ENCODE measurements at regions of chr4 and their contacts with region 1.

Region 1: DNA sequence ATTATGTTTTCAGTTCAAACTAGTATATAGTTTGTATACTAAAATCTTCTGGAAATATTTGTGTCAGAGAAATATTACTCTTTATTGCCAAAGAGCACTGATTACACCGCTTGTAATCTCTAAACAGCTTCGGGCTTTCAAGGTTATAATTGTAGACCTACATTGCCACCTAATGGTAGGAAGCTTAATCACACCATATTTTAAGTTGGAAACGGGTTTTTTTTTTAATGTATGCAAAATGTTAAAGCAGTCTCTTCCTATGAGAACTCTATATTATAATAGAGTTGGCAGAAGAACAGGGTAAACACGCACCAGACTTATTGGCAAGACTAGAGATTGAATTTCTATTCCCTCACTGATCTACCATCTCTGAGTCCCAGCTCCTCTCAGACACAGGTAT is 19.5 kb upstream of the NFXL1 start:
- DNase-seq: no peak
- H3K4me3 Mint-ChIP-seq: no peak overlapping the region
- H3K27ac Mint-ChIP-seq: no peak overlapping the region
- H3K4me1 Mint-ChIP-seq: peaks cover 2% of the 10 kb centered on the region
- H3K27me3 Mint-ChIP-seq: no peaks in the 10 kb centered on the region

Region 2: DNA sequence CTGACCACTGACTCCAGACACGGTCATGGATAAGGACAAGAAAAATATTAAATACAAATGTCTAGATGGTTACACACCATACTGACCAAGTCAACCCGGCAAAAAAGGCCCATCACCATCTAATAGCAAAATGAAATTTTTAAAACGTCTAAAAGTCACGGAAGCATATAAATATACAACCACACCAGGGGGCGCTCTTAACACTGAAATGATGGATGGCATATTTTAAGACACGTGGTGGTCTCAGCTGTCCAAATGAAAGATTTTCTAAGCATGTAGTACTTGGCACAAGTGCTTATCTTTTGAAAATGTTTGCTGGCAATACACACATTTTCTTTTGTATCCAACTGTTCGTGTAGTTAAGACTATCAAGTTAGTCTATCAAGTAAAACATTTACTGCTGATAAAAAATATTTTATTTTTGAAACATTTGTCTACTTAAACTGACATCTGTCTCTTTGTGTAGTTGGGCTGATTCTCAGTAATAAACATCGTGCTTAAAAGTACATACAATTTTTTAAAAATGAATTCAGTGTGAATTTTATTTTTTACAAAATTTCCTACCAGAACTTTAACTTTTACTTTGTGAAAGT is 1089.4 kb before region 1 on chr4:
- CTCF ChIA-PET with region 1: no interaction called
- intact Hi-C with region 1: loop called (anchors 10 kb)
- DNase-seq: peak; percentile 66
- H3K4me3 Mint-ChIP-seq: no peak overlapping the region
- H3K27ac Mint-ChIP-seq: no peak overlapping the region
- H3K4me1 Mint-ChIP-seq: no peaks in the 10 kb centered on the region
- H3K27me3 Mint-ChIP-seq: no peaks in the 10 kb centered on the region

Region 3: GRCh38 chr4:47490550-47490949 is 443.3 kb before region 1 on chr4:
- CTCF ChIA-PET with region 1: interaction called, 3 read pairs
- intact Hi-C with region 1: loop called (anchors 5 kb)
- DNase-seq: peak; percentile 40
- H3K4me3 Mint-ChIP-seq: no peak overlapping the region
- H3K27ac Mint-ChIP-seq: no peak overlapping the region
- H3K4me1 Mint-ChIP-seq: peaks cover 24% of the 10 kb centered on the region
- H3K27me3 Mint-ChIP-seq: no peaks in the 10 kb centered on the region

Region 4: DNA sequence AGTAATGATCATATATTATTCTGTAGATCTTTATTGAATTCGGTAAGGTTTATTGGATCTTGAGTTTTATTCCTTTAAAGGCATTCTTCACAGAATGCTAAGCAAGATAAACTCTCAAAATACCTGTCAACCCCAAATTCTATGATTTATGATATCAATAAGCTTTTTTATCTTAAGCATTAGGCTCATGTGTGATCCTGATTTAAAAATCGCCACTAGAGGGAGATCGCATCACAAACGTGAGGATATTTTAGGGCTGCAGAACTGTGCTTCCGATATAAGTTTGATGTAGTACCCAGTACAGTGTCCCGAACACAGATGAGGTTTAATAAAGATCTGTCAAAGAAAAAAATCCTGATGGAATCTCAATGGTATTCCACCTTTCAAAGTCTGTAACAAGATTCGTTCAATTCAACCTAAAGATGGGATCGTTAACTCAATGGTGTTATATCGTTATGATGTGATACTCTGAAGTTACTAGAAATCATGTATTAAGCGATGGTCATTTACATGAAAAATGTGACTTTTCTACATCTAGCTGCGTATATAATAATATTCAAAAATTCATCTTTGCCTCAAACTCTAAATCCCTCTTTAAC is 264.9 kb before region 1 on chr4:
- CTCF ChIA-PET with region 1: interaction called, 19 read pairs
- intact Hi-C with region 1: loop called (anchors 1 kb)
- DNase-seq: peak; percentile 27
- H3K4me3 Mint-ChIP-seq: no peak overlapping the region
- H3K27ac Mint-ChIP-seq: no peak overlapping the region
- H3K4me1 Mint-ChIP-seq: no peaks in the 10 kb centered on the region
- H3K27me3 Mint-ChIP-seq: peaks cover 5% of the 10 kb centered on the region

Region 5: DNA sequence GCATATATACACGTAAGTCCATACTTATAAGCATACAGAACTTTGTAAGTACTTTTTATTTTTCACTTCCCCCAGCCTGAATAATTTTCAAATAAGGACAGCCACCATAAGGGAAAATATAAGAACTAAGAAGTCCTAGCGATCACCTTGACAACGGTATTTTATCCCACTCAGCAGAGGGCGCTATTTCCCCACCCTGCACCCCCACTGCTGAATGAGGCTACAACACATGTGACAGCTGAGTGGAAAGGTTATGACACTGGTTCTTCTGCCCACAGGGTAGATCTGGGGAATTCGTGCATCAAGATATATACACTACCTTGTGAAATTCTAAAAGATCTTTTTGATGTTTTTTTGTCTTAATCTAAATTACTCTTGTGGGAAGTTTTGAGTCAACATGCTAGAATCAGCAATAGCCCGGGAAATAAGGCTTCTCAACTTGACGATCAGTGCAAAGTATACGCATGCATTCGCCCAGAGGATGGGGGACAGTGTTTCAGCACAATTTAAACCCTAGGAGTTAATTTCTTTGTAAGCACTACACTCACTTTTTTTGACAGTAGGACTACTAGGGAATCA is 247.5 kb before region 1 on chr4:
- CTCF ChIA-PET with region 1: interaction called, 29 read pairs
- intact Hi-C with region 1: loop called (anchors 1 kb)
- DNase-seq: peak; percentile 85
- H3K4me3 Mint-ChIP-seq: no peak overlapping the region
- H3K27ac Mint-ChIP-seq: no peak overlapping the region
- H3K4me1 Mint-ChIP-seq: no peaks in the 10 kb centered on the region
- H3K27me3 Mint-ChIP-seq: peaks cover 4% of the 10 kb centered on the region

Region 6: DNA sequence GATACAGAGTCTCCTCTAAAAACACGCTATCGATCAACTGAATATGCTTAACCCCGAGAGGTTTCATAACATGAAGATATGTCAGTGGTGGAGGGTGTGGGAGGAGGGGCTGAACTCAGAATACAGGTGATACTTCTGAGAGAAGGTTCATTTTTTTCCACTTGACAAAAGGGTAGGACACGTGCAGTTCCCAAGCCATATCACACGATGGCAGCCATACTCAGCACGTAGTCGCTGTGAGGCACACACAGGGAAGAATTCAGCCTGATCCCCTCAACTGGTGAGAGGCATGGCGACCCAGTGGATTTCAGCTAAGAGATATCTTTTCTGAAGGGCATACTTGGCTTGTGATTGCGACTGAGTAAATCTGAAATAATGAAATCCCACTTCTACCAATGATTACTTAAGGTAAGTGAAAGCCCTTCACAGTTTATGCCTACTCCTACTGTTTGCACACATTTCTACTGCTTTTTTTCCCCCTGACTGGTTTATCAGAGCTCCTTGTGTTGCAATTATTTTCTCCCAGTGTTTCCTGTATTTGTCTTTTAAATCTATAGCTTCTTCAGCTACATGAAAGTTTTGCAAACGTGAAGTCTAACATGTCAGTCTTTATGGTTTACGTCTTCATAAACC is 229.0 kb before region 1 on chr4:
- CTCF ChIA-PET with region 1: interaction called, 8 read pairs
- intact Hi-C with region 1: loop called (anchors 1 kb)
- DNase-seq: peak; percentile 37
- H3K4me3 Mint-ChIP-seq: no peak overlapping the region
- H3K27ac Mint-ChIP-seq: no peak overlapping the region
- H3K4me1 Mint-ChIP-seq: no peaks in the 10 kb centered on the region
- H3K27me3 Mint-ChIP-seq: peaks cover 15% of the 10 kb centered on the region

Region 7: DNA sequence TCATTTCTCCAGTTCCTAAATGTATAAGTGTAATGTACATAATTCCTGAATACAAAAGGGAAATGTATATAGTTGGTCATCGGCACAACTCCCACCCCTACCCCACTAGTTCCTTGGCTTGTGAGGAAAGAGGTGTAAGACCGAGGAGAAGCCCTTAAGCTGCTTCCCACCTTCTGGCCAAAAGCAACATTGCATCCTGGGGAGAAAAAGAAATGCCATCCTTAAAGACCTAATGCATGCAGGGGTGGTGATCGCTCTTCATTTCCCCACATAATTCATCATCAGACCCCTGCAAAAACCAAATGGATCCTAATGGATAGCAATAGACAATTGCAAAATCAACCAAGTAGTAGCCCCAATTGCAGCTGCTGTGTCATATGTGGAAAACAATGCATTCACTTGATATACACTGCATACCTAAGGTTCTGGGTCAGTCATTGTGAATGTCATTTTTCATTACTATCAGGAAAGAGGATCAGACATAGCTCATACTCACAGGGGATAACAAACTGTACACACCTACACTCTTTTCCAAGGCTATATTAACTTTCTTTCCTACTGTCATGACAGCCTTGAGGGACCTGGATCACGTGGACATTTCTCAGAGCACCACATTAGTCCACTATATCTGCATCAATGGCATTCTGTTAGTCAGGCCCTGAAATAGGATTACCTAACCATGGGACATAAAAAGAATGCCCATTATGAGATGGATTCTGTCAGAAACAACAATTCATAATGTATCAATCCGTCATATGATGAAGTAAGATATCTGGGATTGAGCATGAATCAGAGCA is 12.3 kb after region 1 on chr4:
- CTCF ChIA-PET with region 1: interaction called, 12 read pairs
- intact Hi-C with region 1: no loop called
- DNase-seq: no peak
- H3K4me3 Mint-ChIP-seq: no peak overlapping the region
- H3K27ac Mint-ChIP-seq: no peak overlapping the region
- H3K4me1 Mint-ChIP-seq: no peaks in the 10 kb centered on the region
- H3K27me3 Mint-ChIP-seq: no peaks in the 10 kb centered on the region

Region 8: GRCh38 chr4:48557478-48557877 is 623.6 kb after region 1 on chr4:
- CTCF ChIA-PET with region 1: no interaction called
- intact Hi-C with region 1: no loop called
- DNase-seq: peak; percentile 9
- H3K4me3 Mint-ChIP-seq: no peak overlapping the region
- H3K27ac Mint-ChIP-seq: no peak overlapping the region
- H3K4me1 Mint-ChIP-seq: no peaks in the 10 kb centered on the region
- H3K27me3 Mint-ChIP-seq: no peaks in the 10 kb centered on the region

Measured in activated naive CD4-positive, alpha-beta T cell treated with anti-CD3 and anti-CD28 coated beads for 36 hours (primary cell).